ENCODE measurements at regions of chr17 and their contacts with region 1.

Region 1: DNA sequence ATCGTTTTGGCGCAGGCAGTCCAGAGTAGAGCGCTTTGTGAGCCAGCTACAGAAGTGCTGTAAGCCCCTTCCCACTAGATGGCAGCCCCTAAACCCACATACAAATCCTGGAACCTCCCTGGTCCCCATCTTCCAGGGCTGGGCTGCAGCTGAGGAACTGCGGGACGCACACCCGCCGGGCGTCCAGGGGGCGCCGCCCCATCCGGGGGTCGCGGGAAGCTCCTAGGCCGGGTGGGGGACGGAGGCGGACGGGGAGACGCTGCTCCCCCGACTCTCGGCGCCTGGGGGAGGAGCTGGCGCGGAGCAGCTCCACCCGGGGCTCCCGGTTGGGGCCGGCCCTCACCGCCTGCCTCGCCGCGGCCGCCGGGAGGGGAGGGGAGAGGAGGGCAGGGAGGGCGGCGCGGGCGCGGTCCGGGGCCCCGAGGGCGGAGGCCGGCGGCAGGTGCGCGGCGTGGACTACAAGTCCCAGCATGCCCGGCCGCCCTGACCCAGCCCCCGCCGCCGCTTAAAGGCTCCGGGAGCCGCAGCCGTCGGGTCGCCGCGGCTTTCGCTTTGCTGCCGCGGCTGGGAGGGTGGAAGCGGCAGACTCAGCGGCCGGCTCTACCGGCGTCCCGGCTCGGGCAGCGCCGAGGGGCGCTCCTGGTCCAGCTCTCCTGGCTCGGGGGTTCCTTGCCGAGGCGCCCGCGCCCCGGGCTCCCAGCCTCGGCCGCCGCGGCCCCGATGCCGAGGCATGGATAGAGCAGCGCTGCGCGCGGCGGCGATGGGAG is at the start of gene KSR1:
- DNase-seq: peak; percentile 72
- ATAC-seq: peak; percentile 88
- H3K4me3 ChIP-seq: peak within 1 kb of the TSS; percentile 100
- H3K27ac ChIP-seq: peak within 1 kb of the TSS; percentile 93
- H3K4me1 ChIP-seq: peaks cover 23% of the 10 kb centered on the region
- H3K27me3 ChIP-seq: no peaks in the 10 kb centered on the region
- CTCF ChIP-seq: peak; percentile 51
- POLR2A ChIP-seq: peak; percentile 94
- RAD21 ChIP-seq: peak; percentile 48
- total RNA-seq, gene KSR1: 8.9 and 12.5 TPM in 2 replicates

Region 2: DNA sequence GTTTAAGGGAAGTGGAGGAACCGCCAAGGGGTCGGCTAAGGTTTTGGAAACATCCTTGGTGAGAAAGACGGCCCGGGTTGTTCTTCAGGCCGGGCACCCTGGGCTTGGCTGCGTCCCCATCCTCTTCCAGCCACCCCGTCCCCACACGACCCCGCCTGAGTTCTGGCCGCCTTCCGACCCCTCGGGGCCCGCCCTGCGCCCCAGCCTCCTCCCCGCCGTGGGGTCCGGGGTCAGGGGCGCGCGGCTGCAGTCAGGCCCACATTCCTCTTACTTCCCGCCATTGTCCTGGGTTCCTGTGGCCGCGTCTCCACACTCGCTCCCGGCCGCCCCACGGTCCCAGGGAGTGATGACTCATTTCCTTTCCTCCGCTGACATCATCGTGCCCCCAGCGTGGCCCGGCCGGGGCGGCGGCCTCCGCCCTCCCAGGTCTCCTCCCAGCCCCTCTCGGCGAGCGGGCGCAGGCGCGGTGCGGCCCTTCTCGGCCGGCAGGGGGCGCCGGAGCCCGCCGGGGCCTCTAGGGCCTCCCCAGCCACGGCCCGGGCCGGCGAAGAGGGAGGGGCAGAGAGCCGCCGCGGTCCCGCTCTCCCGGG is 102.5 kb before region 1 on chr17:
- CTCF ChIA-PET with region 1: interaction called, 3 read pairs
- POLR2A ChIA-PET with region 1: no interaction called
- dilution Hi-C with region 1: no loop called
- in situ Hi-C with region 1: no loop called
- intact Hi-C with region 1: loop called (anchors 2 kb)
- DNase-seq: peak; percentile 92
- ATAC-seq: peak; percentile 96
- H3K4me3 ChIP-seq: peak overlapping the region; percentile 51
- H3K27ac ChIP-seq: peak overlapping the region; percentile 90
- H3K4me1 ChIP-seq: peaks cover 10% of the 10 kb centered on the region
- H3K27me3 ChIP-seq: no peaks in the 10 kb centered on the region
- CTCF ChIP-seq: peak; percentile 99
- POLR2A ChIP-seq: peak; percentile 79; the same call in 1 of the 2 replicates
- RAD21 ChIP-seq: peak; percentile 98

Region 3: DNA sequence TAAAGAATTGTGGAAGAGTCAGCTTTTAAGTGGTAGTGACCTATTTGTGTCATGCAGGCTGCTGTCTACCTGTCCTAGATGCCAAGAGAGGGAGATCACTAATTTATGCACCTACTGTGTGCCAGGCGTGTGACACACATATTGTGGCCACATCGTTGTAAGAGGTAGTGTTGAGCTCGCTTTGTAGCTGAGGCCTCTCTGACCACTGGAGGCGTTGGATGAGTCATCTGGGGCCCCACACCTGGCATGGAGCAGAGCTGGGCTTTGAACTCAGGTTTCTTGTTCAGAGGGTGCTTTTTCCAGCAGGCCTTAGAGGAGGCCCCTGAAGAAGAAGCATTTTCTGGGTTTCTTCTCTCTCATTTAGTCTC is 122.6 kb after region 1 on chr17:
- CTCF ChIA-PET with region 1: interaction called, 4 read pairs
- POLR2A ChIA-PET with region 1: no interaction called
- dilution Hi-C with region 1: no loop called
- in situ Hi-C with region 1: no loop called
- intact Hi-C with region 1: loop called (anchors 5 kb)
- DNase-seq: peak; percentile 68
- ATAC-seq: no peak
- H3K4me3 ChIP-seq: no peak overlapping the region
- H3K27ac ChIP-seq: peak overlapping the region; percentile 100
- H3K4me1 ChIP-seq: peaks cover 48% of the 10 kb centered on the region
- H3K27me3 ChIP-seq: no peaks in the 10 kb centered on the region
- CTCF ChIP-seq: no peak
- POLR2A ChIP-seq: no peak
- RAD21 ChIP-seq: no peak

Region 4: DNA sequence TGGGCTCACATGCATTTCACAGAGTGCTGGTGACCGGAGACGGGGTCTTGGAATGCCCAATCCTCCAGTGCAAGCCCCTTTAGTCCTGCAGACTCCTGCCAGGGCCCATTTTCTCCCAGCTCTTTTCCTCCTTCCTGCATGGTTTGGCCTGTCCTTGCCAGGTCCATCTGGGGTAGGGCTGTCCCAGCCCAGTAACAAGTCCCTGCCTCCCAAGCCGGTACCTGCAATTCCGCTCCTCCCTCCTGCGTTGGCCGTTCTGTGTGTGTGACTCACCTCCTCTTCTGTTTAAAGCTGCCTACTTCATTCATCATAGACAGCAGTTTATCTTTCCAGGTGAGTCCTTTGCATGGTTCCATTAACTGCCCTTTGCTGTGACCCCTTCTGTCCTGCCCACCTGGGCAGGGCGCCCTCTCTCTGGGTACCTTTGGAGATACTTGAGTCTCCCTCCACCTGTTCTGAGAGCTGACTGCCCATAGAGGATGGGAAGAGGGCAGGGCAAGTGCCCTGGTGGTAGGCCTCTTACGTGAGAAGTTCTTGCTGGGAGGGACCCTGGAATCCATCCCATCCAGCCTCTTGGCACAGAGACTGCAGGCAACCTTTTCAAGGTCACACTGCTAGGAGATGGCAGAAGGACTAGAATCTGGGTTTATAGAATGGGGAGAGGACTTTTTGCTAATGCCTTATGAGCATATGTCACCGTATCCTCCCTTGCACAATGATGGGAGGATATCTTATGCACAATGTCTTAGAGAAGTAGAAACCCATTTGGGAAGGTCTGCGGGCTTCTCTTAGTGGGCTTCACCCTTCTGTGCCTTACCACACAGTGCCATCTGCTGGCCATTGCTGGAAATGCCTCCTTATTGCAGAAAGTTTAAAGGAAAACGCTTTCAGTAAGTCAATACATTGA is 145.2 kb after region 1 on chr17:
- CTCF ChIA-PET with region 1: interaction called, 11 read pairs
- POLR2A ChIA-PET with region 1: no interaction called
- dilution Hi-C with region 1: no loop called
- in situ Hi-C with region 1: no loop called
- intact Hi-C with region 1: loop called (anchors 1 kb)
- DNase-seq: peak; percentile 83
- ATAC-seq: peak; percentile 65
- H3K4me3 ChIP-seq: no peak overlapping the region
- H3K27ac ChIP-seq: no peak overlapping the region
- H3K4me1 ChIP-seq: peaks cover 2% of the 10 kb centered on the region; the same call in 1 of the 2 replicates
- H3K27me3 ChIP-seq: no peaks in the 10 kb centered on the region
- CTCF ChIP-seq: peak; percentile 97
- POLR2A ChIP-seq: peak; percentile 37; the same call in 1 of the 2 replicates
- RAD21 ChIP-seq: peak; percentile 97